Caco-2 (cell line): ENCODE measurements at regions of chr12 and their contacts with region 1.

Region 1: DNA sequence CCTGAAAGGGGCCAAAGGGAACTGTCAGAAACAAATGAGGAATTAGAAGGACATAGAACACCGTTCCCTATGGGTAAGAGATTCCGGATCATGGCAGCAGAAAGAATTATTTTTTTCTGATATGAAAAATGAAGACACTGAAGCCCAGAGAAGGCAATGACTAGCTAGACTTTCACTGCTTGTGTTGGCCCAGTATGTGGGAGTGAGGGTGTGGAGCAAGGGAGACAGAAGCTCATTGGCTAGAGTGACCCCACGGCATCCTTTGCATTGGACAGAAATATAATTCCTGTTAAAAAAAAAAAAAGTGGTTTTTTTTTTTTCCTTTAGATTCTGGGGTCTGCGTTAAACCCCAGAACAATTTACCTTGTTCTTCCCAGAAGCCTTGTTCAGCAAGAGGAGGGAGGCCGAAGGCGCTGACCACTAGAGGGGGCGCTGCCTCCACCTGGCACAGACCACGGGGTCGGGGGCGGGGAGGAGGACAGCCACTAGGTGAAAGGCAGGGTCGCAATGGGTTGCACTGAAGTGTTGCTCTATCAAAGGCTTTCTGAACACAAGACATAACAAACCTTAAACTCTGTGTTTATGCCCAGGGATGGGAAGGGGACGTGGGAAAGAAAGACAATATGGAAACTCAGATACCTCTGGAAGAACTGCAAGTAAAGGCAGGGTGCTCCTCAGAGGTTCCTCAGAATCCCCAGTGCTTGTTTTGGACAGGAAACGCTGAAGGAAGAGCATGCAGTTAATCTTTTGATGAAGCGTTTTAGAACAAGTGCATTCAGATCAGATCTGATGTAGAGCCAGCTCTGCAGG is 156.8 kb downstream of the KCNA5 start:
- DNase-seq: peak; percentile 85 to 91
- H3K4me3 ChIP-seq: no peak overlapping the region
- H3K4me3 Mint-ChIP-seq: no peak overlapping the region
- H3K27ac Mint-ChIP-seq: peak overlapping the region; percentile 31
- H3K4me1 ChIP-seq: peaks cover 33% of the 10 kb centered on the region
- H3K4me1 Mint-ChIP-seq: peaks cover 36% of the 10 kb centered on the region
- H3K27me3 ChIP-seq: no peaks in the 10 kb centered on the region
- H3K27me3 Mint-ChIP-seq: no peaks in the 10 kb centered on the region
- CTCF ChIP-seq: peak; percentile 97

Region 2: DNA sequence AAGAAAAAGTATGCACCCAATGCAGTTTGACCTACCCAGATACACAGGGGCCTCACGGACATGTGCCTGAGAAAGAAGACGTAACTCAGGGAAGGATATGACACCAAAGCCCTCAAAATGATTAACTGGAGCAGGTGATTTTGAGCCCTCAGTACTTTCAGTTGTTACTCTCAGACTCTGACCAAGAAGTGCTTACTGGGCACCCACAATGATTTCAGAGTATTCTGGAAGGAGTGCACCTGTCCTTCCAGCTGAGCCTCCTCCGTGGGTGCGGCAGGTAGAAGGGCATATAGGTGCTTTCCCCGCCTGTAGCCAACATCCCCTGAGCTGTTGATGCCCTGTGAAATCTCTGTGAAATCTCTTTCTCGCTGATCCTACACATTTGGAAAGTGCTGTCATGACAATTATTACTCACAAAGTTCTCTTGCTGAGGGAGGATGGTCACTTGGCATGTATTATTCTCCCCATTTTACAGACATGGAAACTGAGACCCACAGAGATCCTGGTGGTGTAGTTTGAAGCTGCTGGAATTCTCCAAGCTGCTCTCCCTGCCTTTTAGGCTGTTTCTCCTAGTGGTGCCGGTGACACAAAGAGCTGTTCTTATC is 1081.2 kb before region 1 on chr12:
- CTCF ChIA-PET with region 1: no interaction called
- POLR2A ChIA-PET with region 1: no interaction called
- intact Hi-C with region 1: no loop called
- DNase-seq: peak in 1 of 2 experiments; percentile 21
- H3K4me3 ChIP-seq: no peak overlapping the region
- H3K4me3 Mint-ChIP-seq: no peak overlapping the region
- H3K27ac Mint-ChIP-seq: no peak overlapping the region
- H3K4me1 ChIP-seq: peaks cover 14% of the 10 kb centered on the region
- H3K4me1 Mint-ChIP-seq: peaks cover 13% of the 10 kb centered on the region
- H3K27me3 ChIP-seq: no peaks in the 10 kb centered on the region
- H3K27me3 Mint-ChIP-seq: peaks cover 18% of the 10 kb centered on the region
- CTCF ChIP-seq: no peak

Region 3: DNA sequence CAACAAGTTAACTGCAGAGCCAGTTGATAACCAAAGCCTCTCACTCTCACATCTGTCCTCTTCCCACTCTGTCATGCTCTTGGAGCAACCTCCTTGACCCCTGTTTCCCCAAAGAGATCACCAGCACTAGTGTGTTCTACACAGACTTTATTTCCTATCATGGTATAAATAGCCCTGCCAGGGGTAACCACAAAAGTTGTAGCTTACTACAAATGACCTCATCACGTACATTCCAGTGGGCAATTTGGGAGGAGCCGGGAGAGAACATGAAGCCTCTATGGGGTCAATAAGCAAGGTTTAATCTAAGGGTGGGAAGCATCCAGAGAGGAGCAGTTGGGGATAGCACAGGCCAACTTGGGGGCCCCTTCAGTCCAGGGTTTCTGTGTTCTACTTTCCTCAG is 29.7 kb after region 1 on chr12:
- CTCF ChIA-PET with region 1: no interaction called
- POLR2A ChIA-PET with region 1: no interaction called
- intact Hi-C with region 1: no loop called
- DNase-seq: no peak
- H3K4me3 ChIP-seq: no peak overlapping the region
- H3K4me3 Mint-ChIP-seq: no peak overlapping the region
- H3K27ac Mint-ChIP-seq: no peak overlapping the region
- H3K4me1 ChIP-seq: no peaks in the 10 kb centered on the region
- H3K4me1 Mint-ChIP-seq: no peaks in the 10 kb centered on the region
- H3K27me3 ChIP-seq: no peaks in the 10 kb centered on the region
- H3K27me3 Mint-ChIP-seq: no peaks in the 10 kb centered on the region
- CTCF ChIP-seq: no peak

Region 4: DNA sequence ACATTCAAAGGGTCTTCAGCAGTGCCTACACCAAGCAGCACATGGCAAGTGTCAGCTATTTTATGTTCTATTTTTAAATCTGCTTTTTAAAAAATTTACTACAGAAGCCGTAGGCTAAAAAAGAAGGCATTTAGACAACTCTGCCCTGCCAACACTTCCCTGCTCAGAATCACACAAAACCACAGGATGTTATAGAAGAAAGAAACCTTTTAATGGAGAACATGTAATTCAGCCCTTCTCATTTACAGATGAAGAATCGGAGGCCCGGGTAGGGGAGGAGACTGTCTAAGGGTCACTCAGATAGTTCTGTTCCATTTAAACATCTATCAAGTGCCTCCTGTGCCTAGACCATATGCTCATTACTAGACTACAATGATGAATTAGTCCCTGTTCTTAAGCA is 59.6 kb after region 1 on chr12:
- CTCF ChIA-PET with region 1: no interaction called
- POLR2A ChIA-PET with region 1: no interaction called
- intact Hi-C with region 1: loop called (anchors 1 kb)
- DNase-seq: no peak
- H3K4me3 ChIP-seq: no peak overlapping the region
- H3K4me3 Mint-ChIP-seq: no peak overlapping the region
- H3K27ac Mint-ChIP-seq: no peak overlapping the region
- H3K4me1 ChIP-seq: peaks cover 22% of the 10 kb centered on the region
- H3K4me1 Mint-ChIP-seq: no peaks in the 10 kb centered on the region
- H3K27me3 ChIP-seq: no peaks in the 10 kb centered on the region
- H3K27me3 Mint-ChIP-seq: no peaks in the 10 kb centered on the region
- CTCF ChIP-seq: no peak

Region 5: GRCh38 chr12:5309654-5310053 is 109.2 kb after region 1 on chr12:
- CTCF ChIA-PET with region 1: no interaction called
- POLR2A ChIA-PET with region 1: no interaction called
- intact Hi-C with region 1: loop called (anchors 1 kb)
- DNase-seq: no peak
- H3K4me3 ChIP-seq: no peak overlapping the region
- H3K4me3 Mint-ChIP-seq: no peak overlapping the region
- H3K27ac Mint-ChIP-seq: no peak overlapping the region
- H3K4me1 ChIP-seq: peaks cover 22% of the 10 kb centered on the region
- H3K4me1 Mint-ChIP-seq: peaks cover 18% of the 10 kb centered on the region
- H3K27me3 ChIP-seq: no peaks in the 10 kb centered on the region
- H3K27me3 Mint-ChIP-seq: no peaks in the 10 kb centered on the region
- CTCF ChIP-seq: no peak

Region 6: DNA sequence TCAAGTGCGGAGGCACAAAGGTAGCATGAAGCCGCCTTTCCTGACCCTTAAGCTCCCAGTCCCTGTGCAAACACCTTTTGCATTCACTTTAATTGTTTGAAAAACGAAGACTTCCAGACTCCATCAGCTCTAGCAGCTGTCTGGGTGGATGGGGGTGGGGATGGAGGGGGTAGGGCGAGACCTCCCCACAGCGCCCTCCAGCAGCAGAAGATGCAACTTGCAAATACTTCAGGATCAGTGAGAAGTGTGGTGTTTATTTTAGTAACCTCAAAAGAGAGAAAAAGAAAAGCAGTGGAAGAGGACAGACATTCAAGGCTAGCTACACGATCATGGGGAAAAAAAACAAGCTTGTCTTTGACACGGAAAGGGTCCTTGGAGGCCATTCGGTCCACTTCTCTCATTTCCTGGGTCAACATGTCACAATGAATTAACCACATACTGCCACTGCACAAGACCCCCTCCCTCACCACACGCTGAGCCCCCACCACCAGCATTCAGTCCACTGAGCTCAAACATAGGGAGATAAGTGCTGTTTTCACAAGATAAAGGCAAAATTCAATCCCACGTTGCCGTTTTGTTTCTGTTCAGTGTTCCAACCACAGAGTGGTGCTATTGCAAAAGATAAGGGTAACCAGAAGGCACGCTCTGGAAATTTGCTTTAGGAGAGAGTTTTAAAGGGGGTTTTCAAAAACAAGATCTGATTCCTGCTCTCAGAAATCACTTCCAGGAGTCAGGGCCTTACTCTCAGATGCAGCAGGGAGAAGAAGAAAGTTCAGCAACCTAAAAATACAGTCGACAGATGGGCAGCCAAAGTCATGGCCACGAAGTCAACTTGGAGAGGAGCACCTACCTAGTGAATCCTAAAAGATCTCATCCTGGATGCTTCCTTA is 228.1 kb after region 1 on chr12:
- CTCF ChIA-PET with region 1: interaction called, 10 read pairs
- POLR2A ChIA-PET with region 1: no interaction called
- intact Hi-C with region 1: loop called (anchors 1 kb)
- DNase-seq: peak in 1 of 2 experiments; percentile 43
- H3K4me3 ChIP-seq: no peak overlapping the region
- H3K4me3 Mint-ChIP-seq: peak overlapping the region; percentile 52
- H3K27ac Mint-ChIP-seq: peak overlapping the region; percentile 32
- H3K4me1 ChIP-seq: peaks cover 19% of the 10 kb centered on the region
- H3K4me1 Mint-ChIP-seq: peaks cover 26% of the 10 kb centered on the region
- H3K27me3 ChIP-seq: no peaks in the 10 kb centered on the region
- H3K27me3 Mint-ChIP-seq: no peaks in the 10 kb centered on the region
- CTCF ChIP-seq: peak; percentile 46 to 56

Region 7: GRCh38 chr12:5535541-5535940 is 335.1 kb after region 1 on chr12:
- CTCF ChIA-PET with region 1: no interaction called
- POLR2A ChIA-PET with region 1: no interaction called
- intact Hi-C with region 1: no loop called
- DNase-seq: no peak
- H3K4me3 ChIP-seq: no peak overlapping the region
- H3K4me3 Mint-ChIP-seq: no peak overlapping the region
- H3K27ac Mint-ChIP-seq: no peak overlapping the region
- H3K4me1 ChIP-seq: peaks cover 5% of the 10 kb centered on the region; the same call in 1 of the 2 replicates
- H3K4me1 Mint-ChIP-seq: peaks cover 13% of the 10 kb centered on the region
- H3K27me3 ChIP-seq: no peaks in the 10 kb centered on the region
- H3K27me3 Mint-ChIP-seq: no peaks in the 10 kb centered on the region
- CTCF ChIP-seq: no peak

Region 8: GRCh38 chr12:5648692-5649359 is 448.3 kb after region 1 on chr12:
- CTCF ChIA-PET with region 1: no interaction called
- POLR2A ChIA-PET with region 1: no interaction called
- intact Hi-C with region 1: loop called (anchors 10 kb)
- DNase-seq: peak; percentile 62 to 66
- H3K4me3 ChIP-seq: no peak overlapping the region
- H3K4me3 Mint-ChIP-seq: no peak overlapping the region
- H3K27ac Mint-ChIP-seq: no peak overlapping the region
- H3K4me1 ChIP-seq: no peaks in the 10 kb centered on the region
- H3K4me1 Mint-ChIP-seq: peaks cover 8% of the 10 kb centered on the region
- H3K27me3 ChIP-seq: no peaks in the 10 kb centered on the region
- H3K27me3 Mint-ChIP-seq: no peaks in the 10 kb centered on the region
- CTCF ChIP-seq: peak; percentile 81 to 91